SK-N-SH (cell line): ENCODE measurements at regions of chr11 and their contacts with region 1.

Region 1: DNA sequence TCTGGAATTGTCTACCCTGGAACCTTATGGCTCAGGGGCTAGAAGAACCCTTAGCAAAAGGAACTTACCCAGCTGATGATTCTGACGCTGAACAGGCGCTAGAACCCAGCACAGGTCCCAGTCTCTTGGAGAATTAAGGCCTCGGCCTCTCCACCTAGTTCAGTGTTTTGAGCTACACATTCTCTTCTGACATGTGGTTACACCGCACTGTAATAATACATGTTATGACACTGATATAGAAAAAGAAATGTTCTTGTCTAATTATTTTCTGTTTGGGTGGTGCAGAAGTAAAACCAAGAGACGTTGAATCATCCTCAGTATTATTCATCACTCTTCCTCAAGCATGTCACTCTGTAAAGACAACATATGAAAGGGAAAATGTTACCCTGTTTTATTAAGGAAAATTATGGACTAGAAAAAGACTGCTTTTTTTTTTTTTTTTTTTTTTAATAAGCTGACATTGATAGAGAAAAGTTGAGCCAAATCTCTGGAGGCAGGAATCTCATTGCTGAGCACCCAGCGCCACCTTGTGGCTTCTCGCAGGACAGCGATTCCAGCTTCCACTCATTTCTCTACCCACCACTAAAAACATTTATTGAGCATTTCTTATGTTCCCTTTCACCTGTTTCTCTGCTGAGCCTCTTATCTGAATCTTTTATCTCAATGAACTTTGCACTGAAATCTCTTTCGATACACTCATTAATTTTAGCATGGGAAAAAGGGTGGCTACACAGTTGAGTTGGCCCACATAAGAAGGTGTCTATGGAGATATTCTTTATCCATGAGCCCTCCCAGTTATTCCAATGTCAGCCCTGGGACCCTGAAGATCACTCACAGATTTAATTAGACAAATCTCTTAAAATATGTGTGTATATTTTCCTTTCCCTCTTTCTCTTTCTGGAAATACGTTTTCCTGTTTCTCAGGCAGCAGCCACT is 12.6 kb upstream of the APLNR start:
- DNase-seq: no peak
- H3K4me3 ChIP-seq: peak overlapping the region in 1 of 2 experiments; percentile 21; a peak in 1 of 4 replicates
- H3K27ac ChIP-seq: peak overlapping the region in 1 of 2 experiments; percentile 94; a peak in 2 of 4 replicates
- H3K4me1 ChIP-seq: peaks cover 0 to 15% of the 10 kb centered on the region in 2 experiments; a peak in 1 of 4 replicates
- H3K27me3 ChIP-seq: no peaks in the 10 kb centered on the region; the same call in 1 of the 2 replicates
- CTCF ChIP-seq: peak; percentile 89
- EP300 ChIP-seq: no peak
- RAD21 ChIP-seq: peak; percentile 96

Region 2: DNA sequence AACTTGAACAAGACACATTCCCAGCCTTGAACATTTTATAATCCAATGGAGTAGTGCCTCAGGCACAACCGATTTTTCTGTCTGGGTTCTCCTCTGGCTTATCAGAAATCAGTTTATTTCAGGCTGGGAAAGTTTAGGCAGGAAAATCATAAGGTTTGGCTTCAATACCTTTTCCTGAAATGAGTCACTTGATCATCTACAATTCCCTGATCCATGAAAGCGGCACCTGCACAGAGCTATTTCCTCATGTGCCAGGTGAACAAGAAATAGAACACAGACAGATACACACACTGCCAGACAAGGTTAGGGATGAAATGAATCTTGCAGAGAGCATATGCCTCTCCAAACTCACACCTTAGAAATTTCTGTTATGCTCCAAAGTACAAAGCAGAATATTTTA is 394.4 kb before region 1 on chr11:
- CTCF ChIA-PET with region 1: interaction called, 491 read pairs
- POLR2A ChIA-PET with region 1: no interaction called
- DNase-seq: no peak
- H3K4me3 ChIP-seq: no peak overlapping the region
- H3K27ac ChIP-seq: no peak overlapping the region
- H3K4me1 ChIP-seq: no peaks in the 10 kb centered on the region; a peak in 1 of 4 replicates
- H3K27me3 ChIP-seq: no peaks in the 10 kb centered on the region
- CTCF ChIP-seq: no peak
- EP300 ChIP-seq: no peak
- RAD21 ChIP-seq: no peak

Region 3: DNA sequence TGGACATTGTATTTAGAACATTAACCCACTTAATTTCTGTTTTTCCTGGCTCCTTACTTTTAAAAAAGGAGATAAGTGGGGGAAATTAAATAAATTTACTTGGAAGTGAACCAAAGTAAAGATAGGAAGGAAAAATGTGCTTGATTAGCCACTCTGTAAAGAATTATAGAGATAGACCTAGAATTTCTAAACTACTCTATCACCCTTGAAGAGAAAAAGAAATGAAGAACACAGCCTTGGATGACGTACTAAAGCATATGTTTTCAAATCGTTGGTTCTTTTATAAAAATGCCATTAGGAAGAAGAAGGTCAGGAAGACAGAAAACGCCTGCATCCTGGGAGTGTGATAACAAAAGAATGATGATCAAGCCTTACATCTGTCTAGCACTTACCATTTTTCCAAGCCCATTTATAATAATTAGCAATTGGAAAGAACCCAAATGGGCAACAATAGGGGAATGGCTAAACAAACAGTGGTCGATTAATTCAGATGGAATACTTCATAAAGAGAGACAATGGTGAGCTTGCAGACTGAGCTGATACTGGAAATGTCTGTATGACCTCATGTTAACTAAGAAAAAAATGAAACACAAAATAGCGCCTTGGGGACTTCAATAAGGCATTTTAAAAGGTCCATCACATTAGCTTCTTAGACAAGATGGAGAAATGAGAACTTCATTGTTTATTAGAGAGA is 148.9 kb before region 1 on chr11:
- CTCF ChIA-PET with region 1: interaction called, 21 read pairs
- POLR2A ChIA-PET with region 1: no interaction called
- DNase-seq: peak; percentile 44
- H3K4me3 ChIP-seq: no peak overlapping the region
- H3K27ac ChIP-seq: peak overlapping the region in 1 of 2 experiments; percentile 100; a peak in 2 of 4 replicates
- H3K4me1 ChIP-seq: peaks cover 0 to 22% of the 10 kb centered on the region in 2 experiments; a peak in 2 of 4 replicates
- H3K27me3 ChIP-seq: no peaks in the 10 kb centered on the region
- CTCF ChIP-seq: no peak
- EP300 ChIP-seq: peak; percentile 3 to 88; a peak in 3 of 4 replicates
- RAD21 ChIP-seq: peak; percentile 19; the same call in 1 of the 2 replicates

Region 4: DNA sequence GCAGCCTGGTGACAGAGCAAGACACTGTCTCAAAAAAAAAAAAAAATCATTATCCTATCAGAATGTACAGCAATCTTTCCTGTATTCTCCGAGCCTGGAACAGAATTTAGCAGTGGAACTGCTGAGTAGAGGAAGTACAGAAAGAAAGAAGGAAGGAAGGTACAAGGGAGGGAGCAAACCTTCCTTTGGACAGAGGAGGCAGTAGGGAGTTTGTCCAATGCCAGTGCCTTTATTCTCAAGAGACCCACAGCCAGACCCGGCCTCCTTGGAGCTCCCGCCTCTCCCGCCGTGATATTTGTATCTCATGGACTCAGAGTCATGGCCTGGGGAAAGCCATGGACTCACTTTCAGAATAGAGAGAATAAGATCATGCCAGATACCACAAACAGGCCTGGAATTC is 105.6 kb before region 1 on chr11:
- CTCF ChIA-PET with region 1: interaction called, 90 read pairs
- POLR2A ChIA-PET with region 1: interaction called, 6 read pairs
- DNase-seq: no peak
- H3K4me3 ChIP-seq: no peak overlapping the region
- H3K27ac ChIP-seq: peak overlapping the region in 1 of 2 experiments; percentile 99; a peak in 2 of 4 replicates
- H3K4me1 ChIP-seq: peaks cover 0 to 29% of the 10 kb centered on the region in 2 experiments; a peak in 2 of 4 replicates
- H3K27me3 ChIP-seq: no peaks in the 10 kb centered on the region; the same call in 1 of the 2 replicates
- CTCF ChIP-seq: no peak
- EP300 ChIP-seq: no peak
- RAD21 ChIP-seq: peak; percentile 40

Region 5: GRCh38 chr11:57203359-57203758 is 46.3 kb before region 1 on chr11:
- CTCF ChIA-PET with region 1: interaction called, 23 read pairs
- POLR2A ChIA-PET with region 1: no interaction called
- DNase-seq: peak; percentile 66
- H3K4me3 ChIP-seq: no peak overlapping the region
- H3K27ac ChIP-seq: peak overlapping the region in 1 of 2 experiments; percentile 88; a peak in 2 of 4 replicates
- H3K4me1 ChIP-seq: peaks cover 0 to 23% of the 10 kb centered on the region in 2 experiments; a peak in 1 of 4 replicates
- H3K27me3 ChIP-seq: no peaks in the 10 kb centered on the region; the same call in 1 of the 2 replicates
- CTCF ChIP-seq: no peak
- EP300 ChIP-seq: peak in 1 of 2 experiments; percentile 44; a peak in 1 of 4 replicates
- RAD21 ChIP-seq: no peak

Region 6: DNA sequence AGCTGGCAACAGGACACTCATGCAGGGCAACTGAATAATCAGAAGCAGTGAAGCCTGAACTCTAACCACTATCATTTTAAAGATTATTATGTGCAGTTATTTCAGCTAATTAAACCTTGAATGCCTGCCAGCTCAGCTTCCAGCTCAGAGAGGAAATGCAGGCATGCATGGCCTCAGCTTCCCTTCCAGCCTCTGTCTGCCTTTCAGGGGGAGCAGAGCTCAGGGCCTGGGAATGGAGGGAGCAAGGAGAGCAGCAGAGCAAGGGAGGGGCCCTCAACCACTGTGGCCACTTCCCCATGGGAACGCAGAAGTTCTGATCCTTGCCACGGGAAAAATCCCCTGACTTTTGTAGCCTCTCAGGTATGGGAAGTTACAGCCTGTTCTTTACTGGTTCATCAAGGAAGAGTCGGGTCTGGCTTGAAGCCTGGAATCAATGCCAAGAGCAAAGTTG is 19.9 kb after region 1 on chr11:
- CTCF ChIA-PET with region 1: interaction called, 34 read pairs
- POLR2A ChIA-PET with region 1: no interaction called
- DNase-seq: no peak
- H3K4me3 ChIP-seq: no peak overlapping the region
- H3K27ac ChIP-seq: no peak overlapping the region
- H3K4me1 ChIP-seq: peaks cover 0 to 11% of the 10 kb centered on the region in 2 experiments; a peak in 1 of 4 replicates
- H3K27me3 ChIP-seq: no peaks in the 10 kb centered on the region
- CTCF ChIP-seq: no peak
- EP300 ChIP-seq: no peak
- RAD21 ChIP-seq: no peak

Region 7: DNA sequence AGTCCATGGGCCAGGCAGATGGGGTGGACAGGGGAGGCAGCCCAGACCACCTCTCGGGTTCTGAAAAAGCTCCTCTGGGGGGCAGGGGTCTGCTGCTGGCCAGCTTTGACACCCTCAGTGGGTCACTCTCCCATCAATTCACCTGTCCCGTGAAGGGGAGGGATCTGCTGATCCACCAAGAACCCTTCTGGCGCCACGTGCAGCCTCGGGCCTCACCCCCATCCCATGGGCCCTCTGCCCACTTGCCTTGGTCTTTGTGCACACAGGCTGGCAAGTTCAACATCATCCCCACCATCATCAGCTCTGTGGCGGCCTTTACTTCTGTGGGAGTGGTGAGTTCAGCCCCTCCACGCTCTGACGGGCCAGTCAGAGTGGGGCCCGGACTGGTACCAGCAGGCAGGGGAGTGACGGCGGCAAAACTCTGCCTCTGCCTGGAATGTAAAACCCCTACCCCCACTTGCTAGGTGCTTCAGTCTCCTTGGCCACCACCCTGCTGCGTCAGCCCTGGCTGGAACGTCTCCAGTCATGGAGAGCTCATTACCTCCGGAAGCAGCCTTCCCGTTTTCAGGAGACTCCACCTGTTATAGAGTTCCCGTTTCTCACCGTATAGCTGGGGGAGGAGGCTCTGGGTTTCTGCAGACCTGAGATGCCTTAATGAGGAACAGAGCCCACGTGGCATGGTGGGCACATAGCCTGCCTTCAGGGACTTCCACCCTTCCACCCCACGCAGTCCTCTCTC is 118.6 kb after region 1 on chr11:
- CTCF ChIA-PET with region 1: no interaction called
- POLR2A ChIA-PET with region 1: no interaction called
- DNase-seq: no peak
- H3K4me3 ChIP-seq: no peak overlapping the region
- H3K27ac ChIP-seq: no peak overlapping the region
- H3K4me1 ChIP-seq: no peaks in the 10 kb centered on the region
- H3K27me3 ChIP-seq: 0 out of 2 replicates have a peak, but pooled peaks cover 8% of the 10 kb centered on the region
- CTCF ChIP-seq: no peak
- EP300 ChIP-seq: no peak
- RAD21 ChIP-seq: no peak